ENCODE measurements at regions of chr12 and their contacts with region 1.

Region 1: DNA sequence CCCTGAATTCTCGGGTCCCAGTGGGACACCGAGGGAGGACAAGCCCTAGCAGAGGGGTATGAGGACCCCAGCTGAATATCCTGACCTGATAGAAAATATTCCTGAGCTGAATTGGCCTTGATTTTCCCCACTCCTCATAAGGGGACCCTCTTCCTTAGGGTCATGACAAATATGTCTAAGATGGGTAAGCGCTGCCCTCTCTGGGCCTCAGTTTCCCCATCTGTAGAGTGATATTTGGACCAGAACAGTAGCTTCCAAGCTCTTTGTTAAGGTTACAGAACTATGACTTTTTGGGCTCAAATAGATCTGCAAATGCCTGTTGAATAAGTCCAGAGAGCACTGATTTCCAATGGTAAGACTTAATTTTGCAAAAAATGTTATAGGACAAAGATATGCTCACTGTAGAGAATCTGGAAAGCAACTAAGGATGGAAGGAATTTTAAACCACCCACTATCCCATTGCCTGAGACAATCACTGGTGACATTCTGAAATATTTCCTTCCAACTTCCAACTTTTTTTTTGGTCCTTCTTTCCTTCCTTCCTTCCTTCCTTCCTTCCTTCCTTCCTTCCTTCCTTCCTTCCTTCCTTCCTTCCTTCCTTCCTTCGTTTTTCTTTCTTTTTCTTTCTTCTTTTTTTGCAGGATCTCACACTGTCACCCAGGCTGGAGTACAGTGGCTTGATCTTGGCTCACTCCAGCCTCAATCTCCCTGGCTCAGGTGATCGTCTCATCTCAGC is 32.0 kb downstream of the MYL2 start:
- DNase-seq: no peak
- ATAC-seq: no peak
- H3K4me3 ChIP-seq: peak overlapping the region; percentile 71
- H3K4me3 Mint-ChIP-seq: peak overlapping the region; percentile 89
- H3K27ac ChIP-seq: no peak overlapping the region
- H3K27ac Mint-ChIP-seq: no peak overlapping the region
- H3K4me1 ChIP-seq: peaks cover 11% of the 10 kb centered on the region
- H3K4me1 Mint-ChIP-seq: peaks cover 3% of the 10 kb centered on the region
- H3K27me3 ChIP-seq: no peaks in the 10 kb centered on the region
- H3K27me3 Mint-ChIP-seq: no peaks in the 10 kb centered on the region
- CTCF ChIP-seq: peak; percentile 54

Region 2: DNA sequence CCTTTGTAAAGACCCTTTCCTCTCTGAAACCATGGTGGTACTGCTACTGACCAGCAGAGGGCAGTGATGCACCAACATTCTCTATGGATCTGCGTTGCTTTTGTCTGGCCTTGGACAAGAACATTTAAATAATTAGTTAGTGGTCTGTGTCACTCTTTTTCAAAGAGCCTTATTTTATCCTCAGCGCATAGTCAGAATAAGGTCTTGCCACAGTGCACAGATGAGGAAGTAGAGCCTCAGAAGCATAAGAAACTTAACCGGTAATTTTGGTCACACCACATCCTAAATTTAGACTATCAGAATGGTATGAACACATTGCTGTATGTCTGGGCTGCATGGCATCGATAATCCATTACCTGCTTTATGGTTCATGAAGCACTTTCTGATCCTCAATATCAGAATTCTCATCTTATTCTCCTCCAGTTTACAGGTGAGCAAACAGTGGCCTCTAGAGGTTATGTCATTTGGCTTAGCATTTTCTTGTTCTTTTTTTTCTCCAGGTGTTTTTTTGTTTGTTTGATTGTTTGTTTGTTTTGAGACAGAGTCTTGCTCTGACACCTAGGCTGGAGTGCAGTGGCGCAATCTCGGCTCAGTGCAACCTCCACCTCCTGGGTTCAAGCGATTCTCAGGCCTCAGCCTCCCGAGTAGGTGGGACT is 788.0 kb before region 1 on chr12:
- CTCF ChIA-PET with region 1: no interaction called
- POLR2A ChIA-PET with region 1: no interaction called
- intact Hi-C with region 1: loop called (anchors 1 to 5 kb)
- DNase-seq: peak; percentile 32 to 84 (median 46)
- ATAC-seq: peak; percentile 80
- H3K4me3 ChIP-seq: no peak overlapping the region
- H3K4me3 Mint-ChIP-seq: no peak overlapping the region
- H3K27ac ChIP-seq: no peak overlapping the region
- H3K27ac Mint-ChIP-seq: no peak overlapping the region
- H3K4me1 ChIP-seq: no peaks in the 10 kb centered on the region
- H3K4me1 Mint-ChIP-seq: peaks cover 13% of the 10 kb centered on the region
- H3K27me3 ChIP-seq: no peaks in the 10 kb centered on the region
- H3K27me3 Mint-ChIP-seq: no peaks in the 10 kb centered on the region
- CTCF ChIP-seq: peak; percentile 99

Region 3: DNA sequence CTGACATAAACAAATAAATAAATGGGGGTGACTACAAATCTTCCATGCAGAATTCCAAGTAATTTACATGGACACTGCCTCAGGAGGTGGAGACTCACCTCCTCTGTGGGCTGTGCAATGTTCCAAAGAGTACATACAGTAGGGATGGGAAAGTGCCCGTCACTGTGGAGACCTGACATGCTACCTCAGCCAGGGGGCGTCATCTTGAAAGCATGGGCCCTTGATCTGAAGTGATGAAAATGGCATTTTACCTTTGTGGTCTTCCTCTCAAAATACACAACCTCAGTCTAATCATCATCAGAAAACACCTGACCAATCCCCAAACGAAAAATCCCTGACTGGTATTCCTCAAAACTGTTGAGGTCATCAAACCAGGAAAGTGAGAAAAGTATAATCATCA is 533.4 kb before region 1 on chr12:
- CTCF ChIA-PET with region 1: no interaction called
- POLR2A ChIA-PET with region 1: no interaction called
- intact Hi-C with region 1: loop called in 1 of 2 experiments (anchors 10 kb)
- DNase-seq: peak in 6 of 14 experiments; percentile 12 to 61 (median 38)
- ATAC-seq: peak; percentile 70
- H3K4me3 ChIP-seq: no peak overlapping the region
- H3K4me3 Mint-ChIP-seq: no peak overlapping the region
- H3K27ac ChIP-seq: no peak overlapping the region
- H3K27ac Mint-ChIP-seq: no peak overlapping the region
- H3K4me1 ChIP-seq: no peaks in the 10 kb centered on the region
- H3K4me1 Mint-ChIP-seq: peaks cover 23% of the 10 kb centered on the region
- H3K27me3 ChIP-seq: no peaks in the 10 kb centered on the region
- H3K27me3 Mint-ChIP-seq: no peaks in the 10 kb centered on the region
- CTCF ChIP-seq: peak; percentile 29

Region 4: GRCh38 chr12:110513842-110514241 is 374.6 kb before region 1 on chr12:
- CTCF ChIA-PET with region 1: no interaction called
- POLR2A ChIA-PET with region 1: no interaction called
- intact Hi-C with region 1: loop called in 1 of 2 experiments (anchors 5 kb)
- DNase-seq: no peak
- ATAC-seq: no peak
- H3K4me3 ChIP-seq: no peak overlapping the region
- H3K4me3 Mint-ChIP-seq: no peak overlapping the region
- H3K27ac ChIP-seq: no peak overlapping the region
- H3K27ac Mint-ChIP-seq: no peak overlapping the region
- H3K4me1 ChIP-seq: no peaks in the 10 kb centered on the region
- H3K4me1 Mint-ChIP-seq: no peaks in the 10 kb centered on the region
- H3K27me3 ChIP-seq: no peaks in the 10 kb centered on the region
- H3K27me3 Mint-ChIP-seq: no peaks in the 10 kb centered on the region
- CTCF ChIP-seq: no peak

Region 5: GRCh38 chr12:110577717-110578521 is 310.5 kb before region 1 on chr12:
- CTCF ChIA-PET with region 1: no interaction called
- POLR2A ChIA-PET with region 1: no interaction called
- intact Hi-C with region 1: no loop called
- DNase-seq: peak in 6 of 14 experiments; percentile 19 to 83 (median 52)
- ATAC-seq: peak; percentile 27
- H3K4me3 ChIP-seq: peak overlapping the region; percentile 13
- H3K4me3 Mint-ChIP-seq: peak overlapping the region; percentile 96
- H3K27ac ChIP-seq: peak overlapping the region; percentile 67 to 79
- H3K27ac Mint-ChIP-seq: peak overlapping the region; percentile 92
- H3K4me1 ChIP-seq: peaks cover 51% of the 10 kb centered on the region
- H3K4me1 Mint-ChIP-seq: peaks cover 80% of the 10 kb centered on the region
- H3K27me3 ChIP-seq: no peaks in the 10 kb centered on the region
- H3K27me3 Mint-ChIP-seq: no peaks in the 10 kb centered on the region
- CTCF ChIP-seq: no peak

Region 6: GRCh38 chr12:110733089-110733715 is 155.2 kb before region 1 on chr12:
- CTCF ChIA-PET with region 1: no interaction called
- POLR2A ChIA-PET with region 1: no interaction called
- intact Hi-C with region 1: loop called in 1 of 2 experiments (anchors 10 kb)
- DNase-seq: no peak
- ATAC-seq: no peak
- H3K4me3 ChIP-seq: no peak overlapping the region
- H3K4me3 Mint-ChIP-seq: peak overlapping the region; percentile 15
- H3K27ac ChIP-seq: no peak overlapping the region
- H3K27ac Mint-ChIP-seq: peak overlapping the region; percentile 63
- H3K4me1 ChIP-seq: peaks cover 61% of the 10 kb centered on the region
- H3K4me1 Mint-ChIP-seq: peaks cover 76% of the 10 kb centered on the region
- H3K27me3 ChIP-seq: no peaks in the 10 kb centered on the region
- H3K27me3 Mint-ChIP-seq: no peaks in the 10 kb centered on the region
- CTCF ChIP-seq: no peak